Stomach (tissue), 19 donors: ENCODE measurements at regions of chr7 and their contacts with region 1.

Region 1: DNA sequence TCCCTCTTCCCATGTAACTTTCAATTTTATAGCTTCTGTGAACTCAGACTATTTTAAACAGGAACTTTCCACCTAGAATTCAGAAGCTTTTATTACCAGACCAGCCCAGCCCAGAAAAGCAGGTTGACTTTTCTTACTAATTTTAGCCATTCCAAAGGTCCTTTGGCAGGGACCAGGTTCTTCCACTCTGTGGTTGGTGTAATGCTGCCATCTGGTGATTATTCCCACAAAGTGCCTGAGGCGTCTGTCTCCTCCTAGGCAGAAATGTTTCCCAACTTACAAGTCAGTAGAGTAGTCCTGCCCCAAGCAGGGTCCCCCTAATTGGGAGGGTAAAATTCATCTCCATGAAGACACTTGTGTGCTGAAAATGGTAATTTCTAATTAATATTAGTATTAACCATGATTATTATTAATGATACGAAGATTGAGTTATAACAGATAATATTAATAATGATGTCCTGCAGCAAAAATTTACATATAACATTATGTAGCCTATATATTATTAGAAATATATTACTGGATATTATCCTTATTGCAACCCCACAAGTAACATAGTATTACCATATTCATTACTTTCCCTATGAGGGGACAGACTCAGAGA is 53.0 kb upstream of the PPP1R17 start:
- DNase-seq: peak; percentile 67 to 87
- H3K4me3 ChIP-seq: no peak overlapping the region
- H3K27ac ChIP-seq: peak overlapping the region in 1 of 5 donors; percentile 42
- H3K4me1 ChIP-seq: peaks cover 0 to 8% (median 0%) of the 10 kb centered on the region in 4 donors
- H3K27me3 ChIP-seq: no peaks in the 10 kb centered on the region
- CTCF ChIP-seq: peak in 5 of 7 experiments; percentile 39 to 86 (median 56)
- EP300 ChIP-seq: no peak
- POLR2A ChIP-seq: no peak

Region 2: GRCh38 chr7:31134246-31135188 is 499.5 kb before region 1 on chr7:
- intact Hi-C with region 1: loop called (anchors 10 kb)
- DNase-seq: peak; percentile 74 to 92
- H3K4me3 ChIP-seq: no peak overlapping the region
- H3K27ac ChIP-seq: peak overlapping the region in 2 of 5 donors; percentile 55 to 57
- H3K4me1 ChIP-seq: peaks cover 5 to 23% (median 17%) of the 10 kb centered on the region in 4 donors
- H3K27me3 ChIP-seq: no peaks in the 10 kb centered on the region
- CTCF ChIP-seq: peak in 5 of 7 experiments; percentile 60 to 80 (median 72)
- EP300 ChIP-seq: no peak
- POLR2A ChIP-seq: no peak

Region 3: DNA sequence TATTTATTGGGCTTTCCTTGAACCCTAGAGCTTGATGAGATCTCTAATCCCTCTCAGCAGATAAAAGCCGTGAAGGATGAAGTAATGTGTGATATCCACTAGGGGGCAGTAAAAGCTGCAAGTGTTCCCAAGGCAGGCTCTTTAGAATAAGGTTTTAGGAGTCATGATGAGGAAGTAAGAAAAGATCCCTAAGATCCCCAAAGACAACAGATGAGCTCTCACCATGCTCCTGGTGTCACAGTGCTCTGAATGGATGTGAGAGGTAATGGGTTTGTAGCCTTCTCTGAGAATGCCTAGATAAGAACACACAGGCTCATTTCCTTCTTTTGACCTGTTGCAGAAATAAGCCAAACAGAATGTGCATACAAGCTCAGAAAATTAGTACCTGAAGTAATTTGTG is 190.5 kb before region 1 on chr7:
- intact Hi-C with region 1: loop called (anchors 10 kb)
- DNase-seq: peak in 1 of 2 donors; percentile 67
- H3K4me3 ChIP-seq: no peak overlapping the region
- H3K27ac ChIP-seq: no peak overlapping the region
- H3K4me1 ChIP-seq: peaks cover 0 to 9% (median 0%) of the 10 kb centered on the region in 4 donors
- H3K27me3 ChIP-seq: no peaks in the 10 kb centered on the region
- CTCF ChIP-seq: peak in 5 of 7 experiments; percentile 41 to 73 (median 63)
- EP300 ChIP-seq: no peak
- POLR2A ChIP-seq: no peak

Region 4: GRCh38 chr7:31464601-31465000 is 169.4 kb before region 1 on chr7:
- intact Hi-C with region 1: no loop called
- DNase-seq: no peak
- H3K4me3 ChIP-seq: no peak overlapping the region
- H3K27ac ChIP-seq: no peak overlapping the region
- H3K4me1 ChIP-seq: no peaks in the 10 kb centered on the region
- H3K27me3 ChIP-seq: no peaks in the 10 kb centered on the region
- CTCF ChIP-seq: no peak
- EP300 ChIP-seq: no peak
- POLR2A ChIP-seq: no peak

Region 5: DNA sequence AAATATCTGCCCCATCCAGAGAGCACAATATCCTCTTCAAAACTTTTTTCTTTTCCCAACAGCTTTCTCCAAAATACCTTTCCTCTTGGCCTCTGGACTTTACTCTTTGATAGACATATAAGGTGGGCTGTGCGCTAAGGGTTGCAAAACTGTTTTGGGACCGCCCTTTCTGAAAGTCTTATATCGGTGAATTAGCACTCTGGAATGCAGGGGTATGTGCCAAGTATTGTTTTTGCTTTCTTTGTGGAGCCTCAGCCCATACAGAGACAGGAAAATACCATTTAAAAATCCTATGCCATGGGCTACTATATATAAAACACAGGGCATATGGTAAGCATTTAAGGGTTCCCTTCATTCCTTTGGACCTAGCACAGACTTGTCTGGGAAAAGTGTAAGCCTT is 90.7 kb after region 1 on chr7:
- intact Hi-C with region 1: no loop called
- DNase-seq: no peak
- H3K4me3 ChIP-seq: no peak overlapping the region
- H3K27ac ChIP-seq: no peak overlapping the region
- H3K4me1 ChIP-seq: no peaks in the 10 kb centered on the region
- H3K27me3 ChIP-seq: no peaks in the 10 kb centered on the region
- CTCF ChIP-seq: no peak
- EP300 ChIP-seq: no peak
- POLR2A ChIP-seq: no peak